Activated T-helper 2 cell treated with anti-CD3 and anti-CD28 coated beads, Interferon-gamma antibody, Interleukin-2, Interleukin-4, amounts not matched to agents 10 μg/mL and 5 μg/mL and 100 μg/mL, durations not matched to agents 14 hours and 24 hours and 36 hours (primary cell): ENCODE measurements at regions of chr1 and their contacts with region 1.

Region 1: GRCh38 chr1:173297798-173298391 is 90.8 kb upstream of the TNFSF4 start:
- DNase-seq: no peak
- H3K4me3 Mint-ChIP-seq: no peak overlapping the region
- H3K27ac Mint-ChIP-seq: peak overlapping the region; percentile 2
- H3K4me1 Mint-ChIP-seq: peaks cover 28% of the 10 kb centered on the region
- H3K27me3 Mint-ChIP-seq: peaks cover 37% of the 10 kb centered on the region

Region 2: DNA sequence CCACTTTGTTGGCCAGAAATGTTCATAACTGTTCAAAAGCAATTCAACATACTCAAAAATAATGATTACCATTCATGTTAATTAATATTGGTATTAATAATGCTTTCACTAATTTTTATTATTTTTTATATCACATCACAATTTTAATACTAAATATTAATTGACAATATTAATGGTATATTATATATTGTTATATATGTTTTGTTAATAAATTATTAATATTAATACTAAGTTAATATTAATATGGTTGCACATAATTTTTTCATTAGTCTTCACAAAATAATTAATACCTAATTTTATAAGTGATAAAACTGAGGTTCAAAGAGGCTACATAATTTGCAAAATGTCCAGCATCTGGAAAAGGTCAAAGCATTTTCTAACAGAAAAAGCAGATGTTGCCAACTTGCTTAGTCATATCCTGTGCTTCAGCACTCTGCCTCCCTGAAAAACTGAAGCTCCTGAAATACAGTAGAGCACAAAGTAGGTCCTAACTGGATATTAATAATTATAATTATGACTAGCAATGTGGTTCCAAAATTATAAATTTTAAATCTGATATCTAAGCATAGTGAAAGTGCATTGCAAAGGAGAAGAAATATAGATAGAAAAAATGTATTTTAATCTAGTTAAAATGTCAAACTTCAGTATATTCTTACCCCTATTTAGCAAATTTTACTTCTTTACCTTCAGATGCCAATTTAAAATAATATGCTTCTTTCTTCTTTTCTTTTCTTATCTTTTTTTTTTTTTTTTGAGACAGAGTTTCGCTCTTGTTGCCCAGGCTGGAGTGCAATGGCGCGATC is 32.5 kb after region 1 on chr1:
- intact Hi-C with region 1: loop called (anchors 1 kb)
- DNase-seq: no peak
- H3K4me3 Mint-ChIP-seq: no peak overlapping the region
- H3K27ac Mint-ChIP-seq: no peak overlapping the region
- H3K4me1 Mint-ChIP-seq: peaks cover 16% of the 10 kb centered on the region
- H3K27me3 Mint-ChIP-seq: peaks cover 2% of the 10 kb centered on the region